Common myeloid progenitor, CD34-positive (primary cell): ENCODE measurements at regions of chr1 and their contacts with region 1.

Region 1: DNA sequence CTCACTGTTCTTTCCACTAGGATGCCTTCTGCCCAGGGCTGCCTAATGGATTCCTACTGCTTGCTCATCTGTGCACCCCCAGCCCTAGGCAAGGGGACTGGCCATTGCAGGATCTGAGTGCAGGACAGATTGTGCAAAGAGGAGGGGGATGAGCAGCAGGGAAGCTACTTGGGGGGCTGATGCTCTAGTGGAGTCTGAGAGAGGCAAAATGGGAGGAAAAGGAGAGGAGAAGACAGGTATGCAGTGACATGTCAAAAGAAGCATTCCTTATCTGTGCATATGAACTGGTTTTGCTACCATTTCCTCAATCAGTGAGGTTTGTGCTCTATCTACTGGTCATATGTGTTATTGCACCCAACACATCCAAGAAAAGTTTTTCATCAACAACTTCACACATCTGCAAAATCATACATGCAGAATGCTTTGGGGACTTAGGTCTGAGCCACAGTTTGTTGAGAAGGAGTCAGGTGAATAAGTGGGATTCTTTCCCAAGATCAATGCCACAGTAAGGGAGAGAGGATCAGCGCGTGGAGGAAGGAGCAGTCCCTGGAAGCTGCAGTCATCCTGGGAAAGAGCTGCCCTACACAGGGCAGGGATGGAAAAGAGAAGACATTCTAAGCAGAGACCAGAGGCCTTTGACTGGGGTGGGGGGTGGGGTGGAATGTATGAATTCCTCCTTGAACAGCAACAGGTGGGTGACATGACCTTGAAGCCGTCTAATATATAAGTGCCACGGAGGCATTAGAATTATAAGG is 14.4 kb downstream of the SLC5A9 start:
- DNase-seq: peak; percentile 35 to 68 (median 62)
- H3K4me3 ChIP-seq: no peak overlapping the region
- H3K27ac ChIP-seq: no peak overlapping the region
- H3K4me1 ChIP-seq: peaks cover 0 to 3% (median 1%) of the 10 kb centered on the region in 4 experiments
- H3K27me3 ChIP-seq: no peaks in the 10 kb centered on the region

Region 2: DNA sequence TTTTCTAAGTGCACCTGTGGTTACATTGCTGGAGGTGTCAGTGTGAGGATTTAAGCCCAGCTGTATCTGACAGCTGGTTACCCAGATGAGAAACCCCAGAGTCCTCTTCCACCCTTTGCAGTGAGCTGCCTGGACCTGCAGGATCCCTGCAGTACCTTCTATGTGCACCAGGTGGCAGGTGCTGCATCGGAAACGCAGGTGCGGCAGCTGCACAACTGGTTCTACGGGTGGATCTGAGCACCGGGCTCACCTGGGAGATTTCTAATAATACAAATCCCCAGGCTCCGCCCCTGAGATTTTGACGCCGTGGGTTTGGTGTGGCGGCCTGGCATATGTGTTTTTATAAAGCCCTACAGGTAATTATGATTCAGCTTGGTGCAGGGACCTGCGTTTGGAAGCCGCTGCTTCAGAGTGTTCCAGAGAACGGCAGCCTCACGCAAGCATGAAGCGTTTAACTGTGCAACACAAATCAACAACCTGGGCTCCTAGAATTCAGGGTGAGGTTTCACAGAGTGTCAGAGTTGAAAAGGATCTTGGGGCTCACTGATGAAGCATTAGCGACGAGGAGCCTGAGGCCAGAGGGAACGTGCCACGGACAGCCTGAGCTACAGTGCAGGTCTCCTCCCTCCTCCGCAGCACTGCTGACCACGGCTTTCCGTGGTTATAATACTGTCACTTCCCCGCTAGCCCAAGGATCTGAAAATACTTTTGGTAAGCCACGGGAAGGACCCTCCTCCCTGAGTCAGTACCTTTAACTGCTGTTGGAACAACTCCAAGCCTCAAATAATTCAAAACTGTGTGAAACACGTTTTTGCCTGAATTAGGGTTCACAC is 143.0 kb before region 1 on chr1:
- CTCF ChIA-PET with region 1: interaction called, 14 read pairs
- POLR2A ChIA-PET with region 1: no interaction called
- DNase-seq: peak; percentile 63 to 84 (median 83)
- H3K4me3 ChIP-seq: peak overlapping the region in 5 of 7 experiments; percentile 20 to 56 (median 44)
- H3K27ac ChIP-seq: no peak overlapping the region
- H3K4me1 ChIP-seq: peaks cover 0 to 9% (median 6%) of the 10 kb centered on the region in 4 experiments
- H3K27me3 ChIP-seq: peaks cover 0 to 8% (median 0%) of the 10 kb centered on the region in 5 experiments

Region 3: GRCh38 chr1:48190881-48191280 is 46.0 kb before region 1 on chr1:
- CTCF ChIA-PET with region 1: no interaction called
- POLR2A ChIA-PET with region 1: no interaction called
- DNase-seq: no peak
- H3K4me3 ChIP-seq: no peak overlapping the region
- H3K27ac ChIP-seq: no peak overlapping the region
- H3K4me1 ChIP-seq: peaks cover 0 to 2% (median 0%) of the 10 kb centered on the region in 4 experiments
- H3K27me3 ChIP-seq: no peaks in the 10 kb centered on the region

Region 4: GRCh38 chr1:48422009-48422408 is 185.1 kb after region 1 on chr1:
- CTCF ChIA-PET with region 1: no interaction called
- POLR2A ChIA-PET with region 1: no interaction called
- DNase-seq: no peak
- H3K4me3 ChIP-seq: no peak overlapping the region
- H3K27ac ChIP-seq: no peak overlapping the region
- H3K4me1 ChIP-seq: no peaks in the 10 kb centered on the region
- H3K27me3 ChIP-seq: no peaks in the 10 kb centered on the region